Right cardiac atrium (tissue), 5 donors: ENCODE measurements at regions of chr6 and their contacts with region 1.

Region 1: DNA sequence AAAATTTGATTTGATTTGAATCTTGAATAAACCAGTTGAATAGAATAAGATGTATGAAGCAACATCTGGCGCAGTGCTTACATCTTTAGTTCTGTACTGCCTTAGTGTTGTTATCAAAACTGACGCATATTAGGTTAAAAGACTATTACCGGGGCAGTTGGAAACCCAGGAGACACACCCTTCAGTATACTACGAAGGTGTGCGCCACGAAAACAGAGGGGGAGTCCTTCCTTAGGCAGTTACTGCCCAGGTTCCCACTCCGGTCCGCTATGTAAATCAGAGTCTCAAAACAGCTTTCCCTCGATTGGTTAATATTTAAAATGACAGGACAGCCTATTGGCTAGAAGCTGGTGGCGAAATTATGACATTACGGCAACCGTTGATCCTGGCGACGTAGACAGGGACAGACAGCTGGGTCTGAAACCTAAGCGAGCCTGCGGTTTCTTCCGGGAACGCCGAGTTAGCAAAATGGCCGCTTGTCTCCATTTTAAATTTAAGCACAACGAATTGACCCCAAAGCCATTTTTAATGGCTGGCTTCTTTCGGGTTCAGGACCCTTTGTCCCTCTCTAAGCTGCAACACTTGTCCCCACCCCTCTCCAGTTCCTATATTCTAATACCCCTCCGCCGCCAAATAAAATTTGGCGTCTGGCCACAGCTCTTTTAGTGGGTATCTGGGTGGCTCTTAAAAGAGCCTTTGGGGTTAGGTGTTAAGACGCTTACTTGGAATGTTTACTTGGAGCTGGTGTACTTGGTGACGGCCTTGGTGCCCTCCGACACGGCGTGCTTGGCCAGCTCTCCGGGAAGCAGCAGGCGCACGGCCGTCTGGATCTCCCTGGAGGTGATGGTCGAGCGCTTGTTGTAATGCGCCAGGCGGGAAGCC is 35.8 kb downstream of the HFE start:
- DNase-seq: peak; percentile 94 to 97 (median 96)
- ATAC-seq: peak; percentile 91 to 93
- H3K4me3 ChIP-seq: peak overlapping the region; percentile 85
- H3K27ac ChIP-seq: peak overlapping the region; percentile 96
- H3K4me1 ChIP-seq: no peaks in the 10 kb centered on the region
- H3K27me3 ChIP-seq: no peaks in the 10 kb centered on the region

Region 2: DNA sequence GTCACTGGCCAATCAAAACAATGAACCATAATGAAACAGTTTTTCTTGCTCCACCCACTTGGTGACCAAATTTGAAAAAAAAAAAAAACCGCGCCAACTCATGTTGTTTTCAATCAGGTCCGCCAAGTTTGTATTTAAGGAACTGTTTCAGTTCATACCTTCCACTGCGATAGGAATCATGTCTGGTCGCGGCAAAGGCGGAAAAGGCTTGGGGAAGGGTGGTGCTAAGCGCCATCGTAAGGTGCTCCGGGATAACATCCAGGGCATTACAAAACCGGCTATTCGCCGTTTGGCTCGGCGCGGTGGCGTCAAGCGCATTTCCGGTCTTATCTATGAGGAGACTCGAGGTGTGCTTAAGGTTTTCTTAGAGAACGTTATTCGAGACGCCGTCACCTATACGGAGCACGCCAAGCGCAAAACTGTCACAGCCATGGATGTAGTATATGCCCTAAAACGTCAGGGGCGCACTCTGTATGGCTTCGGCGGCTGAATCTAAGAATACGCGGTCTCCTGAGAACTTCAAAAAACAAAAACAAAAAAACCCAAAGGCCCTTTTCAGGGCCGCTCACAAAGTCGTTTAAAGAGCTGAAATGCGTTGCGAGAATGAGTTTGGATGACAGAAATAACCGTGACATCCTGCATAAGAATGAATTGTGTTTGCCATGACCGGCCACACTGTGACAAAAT is 19.1 kb before region 1 on chr6:
- intact Hi-C with region 1: loop called in 1 of 4 experiments (anchors 2 kb)
- DNase-seq: peak; percentile 87 to 92 (median 91)
- ATAC-seq: peak; percentile 95 to 96
- H3K4me3 ChIP-seq: peak overlapping the region; percentile 63
- H3K27ac ChIP-seq: peak overlapping the region; percentile 100
- H3K4me1 ChIP-seq: no peaks in the 10 kb centered on the region
- H3K27me3 ChIP-seq: no peaks in the 10 kb centered on the region

Region 3: DNA sequence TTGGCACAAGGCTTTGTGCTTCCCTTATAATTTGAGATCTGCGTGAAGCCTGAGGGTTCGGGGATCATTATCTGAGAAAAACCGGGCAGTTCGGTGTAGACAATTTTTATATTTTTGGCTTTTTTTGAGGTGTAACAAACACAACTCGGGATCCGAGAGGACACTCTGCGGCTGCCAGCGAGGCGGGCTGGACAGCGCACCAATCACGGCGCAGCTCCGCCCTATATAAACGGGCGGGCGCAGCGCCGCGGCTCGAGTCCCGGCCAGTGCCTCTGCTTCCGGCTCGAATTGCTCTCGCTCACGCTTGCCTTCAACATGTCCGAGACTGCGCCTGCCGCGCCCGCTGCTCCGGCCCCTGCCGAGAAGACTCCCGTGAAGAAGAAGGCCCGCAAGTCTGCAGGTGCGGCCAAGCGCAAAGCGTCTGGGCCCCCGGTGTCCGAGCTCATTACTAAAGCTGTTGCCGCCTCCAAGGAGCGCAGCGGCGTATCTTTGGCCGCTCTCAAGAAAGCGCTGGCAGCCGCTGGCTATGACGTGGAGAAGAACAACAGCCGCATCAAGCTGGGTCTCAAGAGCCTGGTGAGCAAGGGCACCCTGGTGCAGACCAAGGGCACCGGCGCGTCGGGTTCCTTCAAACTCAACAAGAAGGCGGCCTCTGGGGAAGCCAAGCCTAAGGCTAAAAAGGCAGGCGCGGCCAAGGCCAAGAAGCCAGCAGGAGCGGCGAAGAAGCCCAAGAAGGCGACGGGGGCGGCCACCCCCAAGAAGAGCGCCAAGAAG is 33.2 kb after region 1 on chr6:
- intact Hi-C with region 1: loop called in 3 of 4 experiments (anchors 2 to 5 kb)
- DNase-seq: peak; percentile 91 to 96 (median 96)
- ATAC-seq: peak; percentile 92
- H3K4me3 ChIP-seq: peak overlapping the region; percentile 89
- H3K27ac ChIP-seq: peak overlapping the region; percentile 98
- H3K4me1 ChIP-seq: no peaks in the 10 kb centered on the region
- H3K27me3 ChIP-seq: no peaks in the 10 kb centered on the region

Region 4: DNA sequence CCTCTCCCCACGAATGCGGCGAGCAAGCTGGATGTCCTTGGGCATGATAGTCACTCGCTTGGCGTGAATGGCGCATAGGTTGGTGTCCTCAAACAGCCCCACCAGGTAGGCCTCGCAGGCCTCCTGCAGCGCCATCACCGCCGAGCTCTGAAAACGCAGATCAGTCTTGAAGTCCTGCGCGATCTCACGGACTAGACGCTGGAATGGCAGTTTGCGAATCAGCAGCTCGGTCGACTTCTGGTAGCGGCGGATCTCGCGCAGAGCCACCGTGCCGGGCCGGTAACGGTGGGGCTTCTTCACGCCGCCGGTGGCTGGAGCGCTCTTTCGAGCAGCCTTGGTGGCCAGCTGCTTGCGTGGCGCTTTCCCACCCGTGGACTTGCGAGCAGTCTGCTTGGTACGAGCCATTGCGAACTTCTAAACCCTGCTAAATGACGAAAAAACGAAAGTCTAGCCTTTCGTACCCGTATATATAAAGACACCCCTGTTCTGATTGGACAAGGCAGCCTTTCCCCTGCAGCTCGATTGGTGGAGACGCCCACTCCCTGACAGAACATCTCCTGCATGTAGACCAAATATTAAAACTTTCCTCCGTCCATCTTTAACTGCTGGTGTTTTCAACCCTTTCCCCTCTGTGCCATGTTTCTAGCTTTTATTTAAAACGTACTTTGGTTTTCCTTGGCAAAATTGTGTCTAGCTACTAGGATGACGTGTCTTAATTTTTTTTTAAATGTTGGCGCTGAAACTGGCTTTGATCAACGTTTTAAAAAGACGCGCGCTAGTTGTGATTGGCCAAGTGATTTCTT is 74.0 kb after region 1 on chr6:
- intact Hi-C with region 1: loop called in 1 of 4 experiments (anchors 10 kb)
- DNase-seq: peak; percentile 77 to 87 (median 83)
- ATAC-seq: peak; percentile 79 to 82
- H3K4me3 ChIP-seq: peak overlapping the region; percentile 82
- H3K27ac ChIP-seq: peak overlapping the region; percentile 99
- H3K4me1 ChIP-seq: peaks cover 5% of the 10 kb centered on the region
- H3K27me3 ChIP-seq: no peaks in the 10 kb centered on the region

Region 5: GRCh38 chr6:26363882-26364701 is 241.1 kb after region 1 on chr6:
- intact Hi-C with region 1: no loop called
- DNase-seq: no peak
- ATAC-seq: no peak
- H3K4me3 ChIP-seq: peak overlapping the region; percentile 98
- H3K27ac ChIP-seq: peak overlapping the region; percentile 85
- H3K4me1 ChIP-seq: peaks cover 7% of the 10 kb centered on the region
- H3K27me3 ChIP-seq: no peaks in the 10 kb centered on the region